ENCODE measurements at regions of chrX and their contacts with region 1.

Region 1: GRCh38 chrX:77640702-77641101 is 145.3 kb downstream of the ATRX start:
- DNase-seq: no peak
- ATAC-seq: no peak
- H3K4me3 ChIP-seq: no peak overlapping the region
- H3K4me3 Mint-ChIP-seq: no peak overlapping the region
- H3K27ac ChIP-seq: no peak overlapping the region
- H3K27ac Mint-ChIP-seq: peak overlapping the region; percentile 68
- H3K4me1 ChIP-seq: no peaks in the 10 kb centered on the region
- H3K4me1 Mint-ChIP-seq: peaks cover 8% of the 10 kb centered on the region
- H3K27me3 ChIP-seq: no peaks in the 10 kb centered on the region
- H3K27me3 Mint-ChIP-seq: no peaks in the 10 kb centered on the region
- CTCF ChIP-seq: no peak

Region 2: GRCh38 chrX:77597090-77597489 is 43.6 kb before region 1 on chrX:
- CTCF ChIA-PET with region 1: no interaction called
- POLR2A ChIA-PET with region 1: no interaction called
- intact Hi-C with region 1: loop called in 1 of 2 experiments (anchors 1 kb)
- DNase-seq: no peak
- ATAC-seq: no peak
- H3K4me3 ChIP-seq: no peak overlapping the region
- H3K4me3 Mint-ChIP-seq: no peak overlapping the region
- H3K27ac ChIP-seq: no peak overlapping the region
- H3K27ac Mint-ChIP-seq: no peak overlapping the region
- H3K4me1 ChIP-seq: no peaks in the 10 kb centered on the region
- H3K4me1 Mint-ChIP-seq: peaks cover 11% of the 10 kb centered on the region
- H3K27me3 ChIP-seq: no peaks in the 10 kb centered on the region
- H3K27me3 Mint-ChIP-seq: no peaks in the 10 kb centered on the region
- CTCF ChIP-seq: no peak

Region 3: DNA sequence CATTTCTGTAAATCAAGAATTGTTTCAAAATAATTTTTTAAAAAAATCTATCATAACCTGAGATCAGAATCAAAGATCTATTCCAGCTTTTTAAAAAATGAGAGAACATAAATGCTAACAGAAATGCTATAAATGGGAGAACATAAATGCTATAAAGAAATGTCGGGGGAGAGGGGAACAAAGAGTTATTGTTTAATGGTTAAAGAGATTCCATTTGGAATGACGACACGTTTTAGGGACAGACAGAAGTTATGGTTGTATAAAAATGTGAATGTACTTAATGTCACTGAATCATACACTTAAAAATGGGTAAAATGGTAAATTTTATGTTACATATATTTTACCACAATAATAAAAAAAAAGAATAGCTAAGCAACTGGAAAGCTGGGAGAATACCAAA is 18.2 kb after region 1 on chrX:
- CTCF ChIA-PET with region 1: no interaction called
- POLR2A ChIA-PET with region 1: no interaction called
- intact Hi-C with region 1: loop called in 1 of 2 experiments (anchors 2 kb)
- DNase-seq: no peak
- ATAC-seq: no peak
- H3K4me3 ChIP-seq: no peak overlapping the region
- H3K4me3 Mint-ChIP-seq: no peak overlapping the region
- H3K27ac ChIP-seq: no peak overlapping the region
- H3K27ac Mint-ChIP-seq: peak overlapping the region; percentile 32
- H3K4me1 ChIP-seq: no peaks in the 10 kb centered on the region
- H3K4me1 Mint-ChIP-seq: peaks cover 2% of the 10 kb centered on the region
- H3K27me3 ChIP-seq: no peaks in the 10 kb centered on the region
- H3K27me3 Mint-ChIP-seq: no peaks in the 10 kb centered on the region
- CTCF ChIP-seq: no peak

Region 4: DNA sequence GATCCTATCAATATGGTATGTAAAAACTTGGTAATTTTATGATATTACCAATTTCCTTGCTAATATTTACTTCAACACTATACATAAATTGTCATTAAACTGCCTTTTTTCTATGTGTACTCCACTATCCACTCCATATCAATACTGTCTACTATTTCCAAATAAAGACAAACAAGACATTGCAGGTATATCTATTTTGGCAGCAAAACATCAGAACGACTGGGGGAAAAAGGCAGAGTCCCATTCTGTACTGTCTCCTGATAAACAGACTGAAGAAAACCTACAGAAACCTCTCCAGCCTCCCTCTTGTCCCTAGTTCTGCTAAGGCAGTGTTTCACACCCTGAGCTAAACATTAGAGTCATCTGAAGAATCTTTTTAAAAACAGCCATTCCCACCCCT is 48.7 kb after region 1 on chrX:
- CTCF ChIA-PET with region 1: no interaction called
- POLR2A ChIA-PET with region 1: no interaction called
- intact Hi-C with region 1: no loop called
- DNase-seq: no peak
- ATAC-seq: no peak
- H3K4me3 ChIP-seq: no peak overlapping the region
- H3K4me3 Mint-ChIP-seq: no peak overlapping the region
- H3K27ac ChIP-seq: no peak overlapping the region
- H3K27ac Mint-ChIP-seq: no peak overlapping the region
- H3K4me1 ChIP-seq: no peaks in the 10 kb centered on the region
- H3K4me1 Mint-ChIP-seq: peaks cover 8% of the 10 kb centered on the region
- H3K27me3 ChIP-seq: no peaks in the 10 kb centered on the region
- H3K27me3 Mint-ChIP-seq: no peaks in the 10 kb centered on the region
- CTCF ChIP-seq: no peak

Measured in CD8-positive, alpha-beta T cell (primary cell).